ENCODE measurements at regions of chr18 and their contacts with region 1.

Region 1: GRCh38 chr18:23619388-23619881 is 33.1 kb upstream of the NPC1 start:
- DNase-seq: no peak
- ATAC-seq: peak; percentile 21
- H3K4me3 ChIP-seq: no peak overlapping the region
- H3K27ac ChIP-seq: no peak overlapping the region
- H3K4me1 ChIP-seq: peaks cover 4% of the 10 kb centered on the region; the same call in 1 of the 2 replicates
- H3K27me3 ChIP-seq: no peaks in the 10 kb centered on the region
- CTCF ChIP-seq: no peak

Region 2: DNA sequence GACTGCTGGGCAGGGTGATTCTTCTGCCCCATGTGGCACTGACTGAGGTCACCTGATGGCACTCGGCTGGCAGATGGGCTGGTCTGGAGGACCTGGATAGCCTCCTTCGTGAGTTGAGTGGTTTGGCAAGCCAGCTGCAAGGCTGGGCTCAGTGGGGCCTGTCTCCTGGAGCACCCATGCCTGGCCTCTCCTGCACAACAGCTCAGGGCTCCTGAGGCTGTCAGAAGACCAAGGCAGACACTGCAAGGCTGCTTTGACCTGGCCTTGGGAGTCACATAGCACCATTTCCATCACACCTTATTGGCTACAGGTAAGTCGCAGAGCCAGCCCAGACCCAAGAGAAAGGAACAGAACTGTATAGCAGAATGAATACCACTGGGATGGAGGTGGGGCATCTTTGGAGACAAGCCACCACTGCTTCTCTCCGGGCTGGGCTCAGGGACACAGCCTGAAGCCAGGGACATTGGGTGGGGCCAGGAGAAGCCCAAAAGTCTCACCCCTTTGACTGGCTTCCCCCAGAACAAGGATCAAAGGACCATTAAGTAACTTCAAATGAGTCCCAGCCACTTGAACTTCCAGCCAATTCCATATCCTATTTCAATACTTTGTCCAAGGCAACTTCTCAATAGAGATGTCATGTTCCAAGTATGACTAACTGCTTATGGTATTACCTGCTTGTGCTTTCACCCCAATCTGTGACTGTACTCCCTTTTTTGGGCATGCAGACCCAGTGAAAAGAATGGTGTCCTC is 327.8 kb before region 1 on chr18:
- CTCF ChIA-PET with region 1: no interaction called
- POLR2A ChIA-PET with region 1: no interaction called
- intact Hi-C with region 1: no loop called
- DNase-seq: peak; percentile 86
- ATAC-seq: peak; percentile 95
- H3K4me3 ChIP-seq: no peak overlapping the region
- H3K27ac ChIP-seq: peak overlapping the region; percentile 71
- H3K4me1 ChIP-seq: peaks cover 20% of the 10 kb centered on the region
- H3K27me3 ChIP-seq: no peaks in the 10 kb centered on the region
- CTCF ChIP-seq: no peak

Region 3: DNA sequence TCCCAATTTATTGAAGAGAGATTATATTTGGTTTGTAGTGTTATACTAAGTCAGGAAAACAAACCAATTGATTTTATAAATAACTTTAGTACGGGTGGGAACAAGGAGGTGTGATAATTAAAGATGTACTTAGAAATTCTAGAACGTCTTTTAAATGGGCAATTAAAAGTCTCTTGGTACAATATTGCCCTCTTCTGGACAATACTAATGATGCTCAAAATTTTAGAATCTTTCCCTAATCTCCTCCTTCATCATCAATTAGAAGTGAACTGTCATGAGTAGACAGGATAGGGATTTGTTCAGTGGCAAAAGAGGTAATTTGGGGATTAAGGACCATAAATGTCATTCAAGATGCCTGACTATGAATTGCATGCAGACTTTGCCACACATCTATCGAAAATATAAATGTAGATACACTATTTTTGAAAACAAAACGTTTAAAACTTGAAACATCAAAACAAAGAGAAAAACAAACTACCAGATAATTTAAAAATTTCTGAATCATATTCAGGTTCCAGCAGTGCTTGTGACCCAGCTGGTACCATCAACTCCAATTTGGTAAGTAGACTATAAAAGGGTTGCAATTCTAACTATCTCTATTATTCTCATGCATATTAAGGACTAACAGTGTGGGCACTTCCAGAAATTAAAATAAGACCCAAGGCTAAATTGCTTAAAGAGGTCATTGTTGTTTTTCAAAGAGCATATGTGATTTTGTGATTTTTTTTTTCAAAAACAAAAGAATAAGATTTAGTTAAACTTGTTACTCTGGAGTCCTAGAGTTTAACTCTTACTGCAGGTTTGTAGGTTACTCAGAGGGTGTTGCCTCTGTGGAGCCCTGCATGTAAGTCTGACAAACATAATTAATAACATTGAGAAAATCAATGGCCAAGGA is 193.4 kb after region 1 on chr18:
- CTCF ChIA-PET with region 1: no interaction called
- POLR2A ChIA-PET with region 1: no interaction called
- intact Hi-C with region 1: loop called (anchors 1 kb)
- DNase-seq: peak; percentile 53
- ATAC-seq: 0 out of 2 replicates have a peak, but pooled peaks have one; percentile 29
- H3K4me3 ChIP-seq: no peak overlapping the region
- H3K27ac ChIP-seq: no peak overlapping the region
- H3K4me1 ChIP-seq: no peaks in the 10 kb centered on the region
- H3K27me3 ChIP-seq: no peaks in the 10 kb centered on the region
- CTCF ChIP-seq: peak; percentile 69

Measured in PC-3 (cell line).